Common myeloid progenitor, CD34-positive (primary cell): ENCODE measurements at regions of chr3 and their contacts with region 1.

Region 1: GRCh38 chr3:190321789-190322603 is at the start of gene CLDN1:
- DNase-seq: peak; percentile 59 to 78 (median 76)
- H3K4me3 ChIP-seq: peak within 1 kb of the TSS; percentile 19 to 72 (median 45)
- H3K27ac ChIP-seq: no peak within 1 kb of the TSS
- H3K4me1 ChIP-seq: peaks cover 0 to 20% (median 17%) of the 10 kb centered on the region in 4 experiments
- H3K27me3 ChIP-seq: peaks cover 2 to 78% (median 19%) of the 10 kb centered on the region in 5 experiments

Region 2: DNA sequence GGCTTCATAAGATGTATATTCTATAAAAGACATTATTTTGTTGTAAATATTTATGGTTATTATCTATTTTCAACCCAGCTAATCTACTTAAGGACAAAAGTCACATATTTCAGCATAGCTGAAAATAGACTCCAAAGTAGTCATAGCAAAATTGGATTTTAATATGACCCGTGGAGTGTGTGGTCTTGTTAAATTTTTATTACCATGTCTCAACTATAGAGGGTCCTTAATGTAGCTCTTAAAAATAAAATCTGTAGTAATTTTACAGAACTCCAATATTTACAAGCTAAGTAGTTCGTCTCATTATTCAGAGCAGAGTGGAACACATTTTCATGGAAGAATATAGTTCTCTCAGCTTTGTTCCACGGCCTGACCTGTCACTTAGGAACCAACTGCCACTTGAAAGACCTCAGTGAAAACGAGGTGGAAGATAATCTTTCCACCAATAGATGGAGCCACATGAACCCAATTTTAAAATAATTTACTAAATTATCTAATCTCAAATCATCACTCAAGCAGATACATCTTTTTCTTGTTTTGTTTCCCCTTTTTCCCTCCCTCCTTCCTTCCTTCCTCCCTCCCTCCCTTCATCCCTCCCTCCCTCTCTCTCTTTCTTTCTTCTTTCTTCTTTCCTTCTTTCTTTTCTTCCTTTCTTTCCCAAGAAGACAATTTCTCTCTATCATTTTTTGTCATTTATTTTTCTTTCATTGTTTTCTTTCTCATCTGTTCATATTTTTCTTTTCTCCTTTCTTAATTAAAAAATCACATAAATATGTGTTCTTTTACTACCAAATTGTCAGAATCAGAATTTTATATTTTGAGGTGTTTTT is 96.9 kb before region 1 on chr3:
- CTCF ChIA-PET with region 1: interaction called, 56 read pairs
- POLR2A ChIA-PET with region 1: no interaction called
- DNase-seq: peak; percentile 32 to 60 (median 56)
- H3K4me3 ChIP-seq: no peak overlapping the region
- H3K27ac ChIP-seq: no peak overlapping the region
- H3K4me1 ChIP-seq: no peaks in the 10 kb centered on the region
- H3K27me3 ChIP-seq: peaks cover 0 to 8% (median 1%) of the 10 kb centered on the region in 5 experiments

Region 3: GRCh38 chr3:190294030-190294429 is 28.0 kb before region 1 on chr3:
- CTCF ChIA-PET with region 1: no interaction called
- POLR2A ChIA-PET with region 1: no interaction called
- DNase-seq: no peak
- H3K4me3 ChIP-seq: no peak overlapping the region
- H3K27ac ChIP-seq: no peak overlapping the region
- H3K4me1 ChIP-seq: no peaks in the 10 kb centered on the region
- H3K27me3 ChIP-seq: no peaks in the 10 kb centered on the region

Region 4: DNA sequence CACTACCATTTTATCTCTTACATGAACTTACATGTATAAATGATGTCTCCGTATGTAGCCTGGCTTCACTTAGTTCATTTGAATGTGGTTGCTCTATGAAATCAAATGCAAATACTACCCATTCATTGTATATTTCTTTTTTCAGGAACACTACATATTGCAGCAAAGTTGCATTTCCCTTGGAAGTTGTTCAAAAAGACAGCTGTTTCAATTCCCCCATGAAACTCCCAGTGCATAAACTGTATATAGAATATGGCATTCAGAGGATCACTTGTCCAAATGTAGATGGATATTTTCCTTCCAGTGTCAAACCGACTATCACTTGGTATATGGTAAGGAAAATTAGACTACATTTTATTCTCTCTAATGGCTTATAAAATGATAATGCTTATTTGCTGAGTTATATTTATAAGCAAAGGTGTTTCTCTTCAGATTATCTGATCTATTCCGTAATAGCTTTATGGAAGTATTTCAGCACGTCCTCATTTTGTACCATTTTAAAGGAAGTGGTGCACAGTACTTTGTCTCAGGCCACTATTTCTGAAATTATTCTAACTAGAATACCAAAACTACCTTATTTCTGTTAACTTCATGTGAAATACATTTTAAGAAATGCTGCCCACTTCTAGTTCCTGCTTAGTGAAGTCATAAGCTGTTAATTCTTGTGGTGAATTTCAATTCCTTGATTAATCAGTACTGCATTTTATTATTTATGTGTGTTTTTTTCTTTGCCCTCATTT is 287.0 kb after region 1 on chr3:
- CTCF ChIA-PET with region 1: no interaction called
- POLR2A ChIA-PET with region 1: no interaction called
- DNase-seq: no peak
- H3K4me3 ChIP-seq: no peak overlapping the region
- H3K27ac ChIP-seq: no peak overlapping the region
- H3K4me1 ChIP-seq: peaks cover 0 to 13% (median 2%) of the 10 kb centered on the region in 4 experiments
- H3K27me3 ChIP-seq: no peaks in the 10 kb centered on the region